MCF 10A (cell line): ENCODE measurements at regions of chr21 and their contacts with region 1.

Region 1: GRCh38 chr21:33947451-33948095 is 32.0 kb upstream of the ATP5PO start:
- DNase-seq: peak; percentile 98
- H3K4me3 Mint-ChIP-seq: peak overlapping the region; percentile 74
- H3K27ac Mint-ChIP-seq: peak overlapping the region; percentile 96
- H3K4me1 Mint-ChIP-seq: peaks cover 36% of the 10 kb centered on the region
- H3K27me3 Mint-ChIP-seq: no peaks in the 10 kb centered on the region
- CTCF ChIP-seq: no peak

Region 2: DNA sequence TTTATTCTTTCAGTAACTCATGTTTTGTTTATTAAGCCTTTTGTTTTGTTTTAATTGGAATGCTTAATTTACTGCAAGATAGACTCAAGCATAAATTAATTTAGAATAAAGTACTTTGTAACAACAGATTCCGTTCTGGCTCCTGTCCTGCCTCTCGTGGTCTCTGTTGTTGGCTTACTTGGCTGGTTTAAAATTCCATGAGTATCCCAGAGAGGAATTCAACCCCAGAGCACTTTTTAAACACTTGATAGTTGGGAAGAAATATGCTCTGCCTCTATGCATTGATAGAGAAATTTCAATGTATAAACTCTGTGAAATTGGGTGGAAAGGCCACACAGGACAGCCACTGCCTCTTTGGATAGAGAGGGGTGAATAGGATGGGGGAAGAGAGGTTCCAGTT is 121.7 kb before region 1 on chr21:
- CTCF ChIA-PET with region 1: no interaction called
- POLR2A ChIA-PET with region 1: no interaction called
- intact Hi-C with region 1: no loop called
- DNase-seq: no peak
- H3K4me3 Mint-ChIP-seq: no peak overlapping the region
- H3K27ac Mint-ChIP-seq: no peak overlapping the region
- H3K4me1 Mint-ChIP-seq: no peaks in the 10 kb centered on the region
- H3K27me3 Mint-ChIP-seq: no peaks in the 10 kb centered on the region
- CTCF ChIP-seq: no peak

Region 3: GRCh38 chr21:33968080-33968994 is 20.8 kb after region 1 on chr21:
- CTCF ChIA-PET with region 1: interaction called, 4 read pairs
- POLR2A ChIA-PET with region 1: interaction called, 18 read pairs
- intact Hi-C with region 1: no loop called
- DNase-seq: peak; percentile 55
- H3K4me3 Mint-ChIP-seq: no peak overlapping the region
- H3K27ac Mint-ChIP-seq: peak overlapping the region; percentile 79
- H3K4me1 Mint-ChIP-seq: peaks cover 24% of the 10 kb centered on the region
- H3K27me3 Mint-ChIP-seq: no peaks in the 10 kb centered on the region
- CTCF ChIP-seq: no peak

Region 4: GRCh38 chr21:33976082-33977016 is 28.8 kb after region 1 on chr21:
- CTCF ChIA-PET with region 1: interaction called, 3 read pairs
- POLR2A ChIA-PET with region 1: interaction called, 38 read pairs
- intact Hi-C with region 1: loop called (anchors 2 kb)
- DNase-seq: peak; percentile 92
- H3K4me3 Mint-ChIP-seq: peak overlapping the region; percentile 60
- H3K27ac Mint-ChIP-seq: peak overlapping the region; percentile 98
- H3K4me1 Mint-ChIP-seq: peaks cover 41% of the 10 kb centered on the region
- H3K27me3 Mint-ChIP-seq: no peaks in the 10 kb centered on the region
- CTCF ChIP-seq: no peak

Region 5: DNA sequence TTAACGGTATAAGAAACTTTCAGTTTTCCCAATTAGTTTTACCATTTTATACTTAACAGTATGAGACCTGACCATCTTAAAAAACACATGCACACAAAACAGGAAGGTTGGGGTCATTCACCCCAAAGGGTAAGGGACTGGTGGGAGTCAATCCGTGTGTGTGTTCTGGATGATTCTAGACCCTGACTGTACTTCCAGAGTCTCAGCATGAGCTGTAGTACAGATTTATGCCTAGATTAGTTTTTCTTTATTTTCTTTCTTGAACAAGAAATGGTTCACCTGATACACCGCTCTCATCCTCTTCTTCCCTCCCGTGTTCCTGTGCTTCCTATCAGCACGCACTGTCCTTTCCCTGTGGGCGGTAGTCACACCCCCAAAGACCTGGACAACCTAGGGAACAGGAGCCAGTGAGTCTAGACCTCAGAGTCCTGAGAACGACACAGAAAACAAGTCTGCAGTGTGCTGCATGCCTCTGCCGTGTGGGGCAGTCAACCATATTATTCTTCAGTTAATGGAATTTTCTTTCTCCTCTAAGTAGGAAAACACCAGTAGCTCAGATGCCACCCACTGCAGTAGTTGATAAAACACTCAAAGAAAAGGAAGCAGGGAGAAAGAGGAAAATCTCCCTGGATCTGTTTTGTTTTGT is 86.9 kb after region 1 on chr21:
- CTCF ChIA-PET with region 1: interaction called, 4 read pairs
- POLR2A ChIA-PET with region 1: interaction called, 12 read pairs
- intact Hi-C with region 1: no loop called
- DNase-seq: no peak
- H3K4me3 Mint-ChIP-seq: no peak overlapping the region
- H3K27ac Mint-ChIP-seq: no peak overlapping the region
- H3K4me1 Mint-ChIP-seq: peaks cover 43% of the 10 kb centered on the region
- H3K27me3 Mint-ChIP-seq: no peaks in the 10 kb centered on the region
- CTCF ChIP-seq: no peak